Right ventricle myocardium inferior (tissue), 1 donor: ENCODE measurements at regions of chr15 and their contacts with region 1.

Region 1: DNA sequence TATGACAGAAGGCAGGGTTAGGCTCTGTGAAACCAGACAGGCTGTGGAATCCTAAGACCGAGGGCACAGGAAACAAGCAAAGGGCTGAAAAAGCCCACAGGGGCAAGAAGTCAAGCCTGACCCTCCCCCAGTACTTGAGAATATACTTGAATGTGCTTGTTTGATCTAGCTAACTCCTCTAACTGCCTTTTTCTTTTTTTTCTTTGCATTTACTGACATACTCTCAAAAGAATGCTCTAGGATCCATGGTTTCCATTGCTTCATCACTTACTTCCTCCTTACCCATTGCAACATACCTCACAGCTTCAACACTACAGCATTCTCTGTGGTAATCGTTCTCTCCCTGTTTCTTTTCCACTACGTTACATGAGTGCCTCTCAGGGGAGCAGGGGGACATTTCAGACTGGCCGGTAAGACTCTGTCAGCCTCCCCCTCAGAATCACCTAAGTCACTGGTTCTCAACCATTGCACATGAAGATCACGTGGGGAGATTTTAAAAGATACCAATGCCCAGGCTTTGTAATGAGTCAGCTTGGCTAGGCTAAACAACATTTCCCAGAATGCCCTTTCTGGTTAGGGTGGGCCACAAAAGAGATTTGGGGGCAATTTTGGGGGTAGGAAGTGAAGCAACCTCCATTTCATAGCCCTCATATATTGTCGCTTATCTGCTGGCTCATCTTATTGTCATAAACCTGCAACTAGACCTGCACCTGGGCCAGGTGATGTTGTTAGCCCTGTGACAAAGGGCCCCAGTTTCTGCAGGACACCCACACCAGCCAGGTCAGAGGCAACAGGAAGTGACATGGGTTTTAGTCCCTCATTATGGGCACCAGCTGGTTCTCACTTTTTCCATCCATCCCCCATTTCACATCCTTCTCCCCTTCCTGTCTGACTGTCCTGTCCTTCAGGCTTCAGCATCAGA is 24.6 kb upstream of the RSL24D1 start:
- DNase-seq: no peak
- ATAC-seq: peak; percentile 77

Region 2: DNA sequence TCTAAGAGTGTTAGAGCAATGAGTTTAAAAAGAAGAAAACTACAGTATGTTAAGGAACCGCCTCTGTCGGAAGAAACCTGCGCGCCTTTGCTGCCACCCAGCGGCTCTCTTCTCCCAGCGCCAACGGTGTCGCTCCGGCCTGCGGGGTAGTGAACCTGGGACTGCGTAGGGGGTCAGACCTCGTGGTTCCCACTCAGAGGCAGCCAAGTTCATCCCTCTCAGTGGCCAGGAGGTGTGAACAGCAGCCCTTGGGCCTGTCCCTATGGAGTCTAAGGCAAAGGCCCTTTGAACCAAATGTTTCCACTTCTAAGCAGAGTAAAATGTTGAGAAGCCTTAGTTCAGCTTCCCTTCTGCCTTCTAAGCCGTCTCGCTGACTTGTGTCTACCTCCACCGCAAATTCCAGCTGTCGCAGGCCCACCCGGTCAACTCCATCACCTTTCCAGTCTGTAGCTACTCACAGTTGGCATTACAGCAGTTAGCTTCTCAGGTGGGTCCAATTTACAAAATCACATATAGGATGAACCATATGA is 69.2 kb after region 1 on chr15:
- intact Hi-C with region 1: loop called (anchors 1 kb)
- DNase-seq: peak; percentile 89
- ATAC-seq: peak; percentile 95

Region 3: GRCh38 chr15:55434989-55435825 is 213.9 kb after region 1 on chr15:
- intact Hi-C with region 1: loop called (anchors 10 kb)
- DNase-seq: no peak
- ATAC-seq: peak; percentile 59